A549 (cell line): ENCODE measurements at regions of chr6 and their contacts with region 1.

Region 1: GRCh38 chr6:13795041-13795750 is 19.2 kb downstream of the MCUR1 start:
- DNase-seq: peak; percentile 23 to 72
- ATAC-seq: peak; percentile 88 to 90
- H3K4me3 ChIP-seq: no peak overlapping the region
- H3K27ac ChIP-seq: no peak overlapping the region
- H3K4me1 ChIP-seq: peaks cover 11% of the 10 kb centered on the region; the same call in 2 of the 3 replicates
- CTCF ChIP-seq: peak; percentile 78
- EP300 ChIP-seq: no peak
- POLR2A ChIP-seq: no peak
- RAD21 ChIP-seq: peak; percentile 69 to 74

Region 2: GRCh38 chr6:13120483-13121482 is 674.4 kb before region 1 on chr6:
- CTCF ChIA-PET with region 1: no interaction called
- POLR2A ChIA-PET with region 1: no interaction called
- DNase-seq: no peak
- ATAC-seq: no peak
- H3K4me3 ChIP-seq: no peak overlapping the region
- H3K27ac ChIP-seq: no peak overlapping the region
- H3K4me1 ChIP-seq: no peaks in the 10 kb centered on the region
- CTCF ChIP-seq: no peak
- EP300 ChIP-seq: no peak
- POLR2A ChIP-seq: no peak
- RAD21 ChIP-seq: no peak

Region 3: GRCh38 chr6:13653296-13653695 is 141.9 kb before region 1 on chr6:
- CTCF ChIA-PET with region 1: no interaction called
- POLR2A ChIA-PET with region 1: no interaction called
- DNase-seq: no peak
- ATAC-seq: no peak
- H3K4me3 ChIP-seq: no peak overlapping the region
- H3K27ac ChIP-seq: no peak overlapping the region
- H3K4me1 ChIP-seq: peaks cover 10% of the 10 kb centered on the region; the same call in 2 of the 3 replicates
- CTCF ChIP-seq: no peak
- EP300 ChIP-seq: no peak
- POLR2A ChIP-seq: no peak
- RAD21 ChIP-seq: no peak

Region 4: GRCh38 chr6:13807696-13808095 is 12.5 kb after region 1 on chr6:
- CTCF ChIA-PET with region 1: interaction called, 13 read pairs
- POLR2A ChIA-PET with region 1: no interaction called
- DNase-seq: no peak
- ATAC-seq: no peak
- H3K4me3 ChIP-seq: no peak overlapping the region
- H3K27ac ChIP-seq: no peak overlapping the region
- H3K4me1 ChIP-seq: peaks cover 5% of the 10 kb centered on the region; the same call in 1 of the 3 replicates
- CTCF ChIP-seq: no peak
- EP300 ChIP-seq: no peak
- POLR2A ChIP-seq: no peak
- RAD21 ChIP-seq: no peak